ENCODE measurements at regions of chr2 and their contacts with region 1.

Region 1: GRCh38 chr2:19349911-19350677 is 8.3 kb downstream of the OSR1 start:
- DNase-seq: peak; percentile 68 to 76
- ATAC-seq: peak in 3 of 4 donors; percentile 19 to 46 (median 27)
- H3K4me3 ChIP-seq: peak overlapping the region; percentile 38
- H3K27ac ChIP-seq: no peak overlapping the region
- H3K4me1 ChIP-seq: peaks cover 10% of the 10 kb centered on the region
- H3K27me3 ChIP-seq: no peaks in the 10 kb centered on the region
- CTCF ChIP-seq: peak; percentile 62

Region 2: GRCh38 chr2:18520451-18521425 is 829.4 kb before region 1 on chr2:
- intact Hi-C with region 1: loop called in 1 of 2 experiments (anchors 10 kb)
- DNase-seq: peak; percentile 89 to 93
- ATAC-seq: peak; percentile 90 to 98 (median 96)
- H3K4me3 ChIP-seq: no peak overlapping the region
- H3K27ac ChIP-seq: peak overlapping the region; percentile 42
- H3K4me1 ChIP-seq: peaks cover 23% of the 10 kb centered on the region
- H3K27me3 ChIP-seq: no peaks in the 10 kb centered on the region
- CTCF ChIP-seq: peak; percentile 93

Region 3: DNA sequence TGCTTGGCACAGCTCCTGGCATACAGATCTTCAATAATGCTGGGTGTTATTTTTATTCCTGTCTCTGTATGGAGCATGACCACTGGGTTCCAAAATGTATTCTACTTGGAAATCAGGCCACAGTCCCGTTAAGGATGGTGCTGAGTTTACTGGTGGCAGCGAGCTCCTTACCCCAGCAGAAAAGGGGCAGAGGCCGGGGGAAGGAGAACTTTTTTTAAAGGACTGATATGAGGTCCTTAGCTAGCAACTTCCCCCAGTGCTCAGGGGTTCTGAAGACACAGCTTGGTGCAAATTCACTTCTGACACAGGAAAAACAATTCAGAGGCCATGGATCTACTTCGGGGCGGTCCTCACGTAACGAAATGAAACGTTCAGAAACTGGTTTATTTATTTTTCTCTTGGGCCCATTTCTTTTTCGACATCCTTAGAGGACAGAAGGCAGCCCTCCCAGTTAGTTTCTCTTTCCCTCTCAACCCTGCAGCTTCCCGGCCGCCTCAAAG is 790.5 kb before region 1 on chr2:
- intact Hi-C with region 1: loop called in 1 of 2 experiments (anchors 10 kb)
- DNase-seq: peak in 1 of 2 donors; percentile 28
- ATAC-seq: peak in 1 of 4 donors; percentile 6
- H3K4me3 ChIP-seq: peak overlapping the region; percentile 86
- H3K27ac ChIP-seq: peak overlapping the region; percentile 97
- H3K4me1 ChIP-seq: peaks cover 31% of the 10 kb centered on the region
- H3K27me3 ChIP-seq: no peaks in the 10 kb centered on the region
- CTCF ChIP-seq: no peak

Region 4: DNA sequence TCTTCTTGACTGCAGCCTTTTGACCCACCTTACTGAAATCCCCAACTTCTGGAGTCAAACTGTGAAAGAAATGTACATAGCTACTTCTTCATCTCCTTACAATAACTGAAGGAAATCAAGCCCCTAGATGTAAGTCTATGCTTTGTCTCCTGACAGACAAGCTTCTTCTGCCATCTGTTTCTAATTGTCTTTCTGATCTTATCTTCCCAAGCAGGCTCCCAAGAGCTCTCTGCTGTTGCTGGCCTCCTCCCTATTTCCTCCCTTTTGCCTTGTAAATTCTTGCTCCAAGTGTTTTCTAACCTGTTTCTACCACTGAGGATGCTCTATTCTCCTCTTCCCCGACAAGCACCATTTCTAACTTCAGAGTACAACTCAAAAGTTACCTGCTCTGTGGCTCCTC is 85.7 kb after region 1 on chr2:
- intact Hi-C with region 1: no loop called
- DNase-seq: no peak
- ATAC-seq: no peak
- H3K4me3 ChIP-seq: no peak overlapping the region
- H3K27ac ChIP-seq: no peak overlapping the region
- H3K4me1 ChIP-seq: no peaks in the 10 kb centered on the region
- H3K27me3 ChIP-seq: no peaks in the 10 kb centered on the region
- CTCF ChIP-seq: no peak

Region 5: GRCh38 chr2:19851116-19851695 is 501.1 kb after region 1 on chr2:
- intact Hi-C with region 1: loop called in 1 of 2 experiments (anchors 5 kb)
- DNase-seq: no peak
- ATAC-seq: no peak
- H3K4me3 ChIP-seq: no peak overlapping the region
- H3K27ac ChIP-seq: no peak overlapping the region
- H3K4me1 ChIP-seq: peaks cover 7% of the 10 kb centered on the region
- H3K27me3 ChIP-seq: no peaks in the 10 kb centered on the region
- CTCF ChIP-seq: no peak

Measured in psoas muscle (tissue), 8 donors.